ENCODE measurements at regions of chr11 and their contacts with region 1.

Region 1: DNA sequence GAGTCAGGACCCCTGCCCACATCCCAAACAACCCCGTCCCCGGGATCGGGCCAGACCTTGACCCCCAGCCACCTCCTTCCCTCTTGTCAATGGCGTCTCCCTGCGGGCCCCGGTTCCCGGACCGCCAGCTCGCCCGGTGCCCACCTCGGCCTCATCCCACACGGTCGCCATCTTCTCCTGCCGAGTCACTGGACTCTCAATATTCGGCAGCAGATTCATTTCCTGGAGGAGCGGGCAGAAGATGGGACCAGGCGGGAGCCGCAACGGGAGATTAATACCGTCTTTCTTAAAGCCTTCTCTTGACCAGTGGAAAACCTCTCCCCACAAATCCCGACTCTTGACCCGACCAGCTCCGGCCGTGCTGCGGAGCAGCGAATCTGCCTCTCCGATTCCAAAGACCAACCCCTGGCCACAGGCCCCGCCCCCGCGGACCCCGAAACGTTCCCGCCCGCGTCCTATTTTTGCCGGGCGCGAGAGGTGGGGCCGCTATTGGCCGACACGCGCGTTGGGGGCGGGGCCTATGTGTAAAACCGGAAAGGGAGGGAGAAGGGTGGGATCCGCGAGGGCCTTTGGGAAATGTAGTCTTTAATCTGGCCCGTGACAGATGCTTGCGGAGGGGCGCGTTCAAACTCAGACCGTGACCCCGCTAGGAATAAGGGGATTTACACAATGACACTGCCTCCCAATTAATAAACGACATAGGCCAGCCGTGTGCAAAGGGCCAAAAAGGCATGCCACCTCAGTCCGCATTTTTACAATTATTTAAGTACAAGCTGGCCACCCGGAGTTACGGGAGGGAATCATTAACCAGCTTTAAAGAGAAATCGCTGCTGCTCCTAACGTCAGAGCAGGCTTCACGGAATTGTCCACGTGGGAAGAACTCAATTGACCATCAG is at the start of gene PSMC3:
- DNase-seq: peak; percentile 100
- ATAC-seq: peak; percentile 98
- H3K4me3 Mint-ChIP-seq: peak within 1 kb of the TSS; percentile 100
- H3K27ac Mint-ChIP-seq: peak within 1 kb of the TSS; percentile 100
- H3K4me1 Mint-ChIP-seq: peaks cover 24% of the 10 kb centered on the region
- H3K27me3 Mint-ChIP-seq: no peaks in the 10 kb centered on the region
- total RNA-seq, gene PSMC3: 147 to 167 TPM

Region 2: GRCh38 chr11:46845740-46846509 is 580.4 kb before region 1 on chr11 and contains the start of gene CKAP5:
- CTCF ChIA-PET with region 1: no interaction called
- POLR2A ChIA-PET with region 1: no interaction called
- intact Hi-C with region 1: loop called in 1 of 2 experiments (anchors 1 kb)
- DNase-seq: peak; percentile 92
- ATAC-seq: peak; percentile 92
- H3K4me3 Mint-ChIP-seq: peak within 1 kb of the TSS; percentile 86
- H3K27ac Mint-ChIP-seq: peak within 1 kb of the TSS; percentile 94
- H3K4me1 Mint-ChIP-seq: peaks cover 30% of the 10 kb centered on the region
- H3K27me3 Mint-ChIP-seq: no peaks in the 10 kb centered on the region
- total RNA-seq, gene CKAP5: 166 to 183 TPM

Region 3: GRCh38 chr11:47213985-47214564 is 212.2 kb before region 1 on chr11:
- CTCF ChIA-PET with region 1: no interaction called
- POLR2A ChIA-PET with region 1: interaction called, 6 read pairs
- intact Hi-C with region 1: loop called (anchors 1 kb)
- DNase-seq: peak; percentile 94
- ATAC-seq: peak; percentile 80
- H3K4me3 Mint-ChIP-seq: peak overlapping the region; percentile 99
- H3K27ac Mint-ChIP-seq: peak overlapping the region; percentile 100
- H3K4me1 Mint-ChIP-seq: peaks cover 31% of the 10 kb centered on the region
- H3K27me3 Mint-ChIP-seq: no peaks in the 10 kb centered on the region

Region 4: GRCh38 chr11:47373876-47374720 is 52.2 kb before region 1 on chr11:
- CTCF ChIA-PET with region 1: interaction called, 7 read pairs
- POLR2A ChIA-PET with region 1: no interaction called
- intact Hi-C with region 1: loop called in 1 of 2 experiments (anchors 1 kb)
- DNase-seq: peak; percentile 92
- ATAC-seq: peak; percentile 89
- H3K4me3 Mint-ChIP-seq: no peak overlapping the region
- H3K27ac Mint-ChIP-seq: peak overlapping the region; percentile 25
- H3K4me1 Mint-ChIP-seq: peaks cover 22% of the 10 kb centered on the region
- H3K27me3 Mint-ChIP-seq: no peaks in the 10 kb centered on the region

Region 5: DNA sequence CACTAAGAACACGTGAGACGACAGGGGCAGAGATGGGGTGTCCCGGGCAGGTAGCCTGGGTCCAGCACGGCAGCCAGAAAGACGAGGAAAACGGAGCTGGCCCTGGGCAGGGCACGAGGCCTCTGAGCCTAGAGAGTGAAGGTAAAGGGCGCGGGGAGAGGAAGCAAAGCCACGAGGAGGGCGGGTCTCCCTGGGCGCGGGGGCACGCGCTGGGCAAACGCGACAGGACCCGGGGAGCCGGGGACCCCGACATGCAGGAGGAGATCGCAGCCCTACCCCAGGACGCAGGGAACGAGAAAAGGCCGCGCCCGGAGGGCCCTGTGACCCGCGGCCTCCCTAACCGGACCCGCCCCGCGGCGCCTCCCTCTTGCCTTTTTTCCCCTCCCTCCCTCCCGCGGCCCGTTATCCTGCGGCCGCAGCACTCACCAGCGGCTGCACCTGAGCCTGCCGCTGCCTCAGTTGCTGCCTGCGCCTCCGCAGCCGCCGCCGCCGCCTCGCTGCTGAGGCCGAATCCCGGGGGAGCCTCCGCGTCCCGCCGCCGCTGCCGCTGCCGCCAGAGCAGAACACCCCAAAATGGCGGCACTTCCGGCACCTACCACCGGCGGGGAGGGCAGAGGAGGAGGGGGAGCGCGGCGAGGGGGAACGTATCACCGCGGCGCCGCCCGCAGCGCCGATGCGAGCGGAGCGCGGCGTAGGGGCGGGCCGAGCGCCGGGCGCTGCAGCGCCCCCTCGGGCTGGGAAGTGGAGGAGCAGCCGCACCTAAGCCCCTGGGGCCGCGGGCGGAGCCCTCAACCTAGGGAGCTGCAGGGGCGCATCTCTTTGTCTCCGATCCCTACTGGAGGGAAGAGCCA is 126.5 kb after region 1 on chr11 and contains the start of gene CELF1:
- CTCF ChIA-PET with region 1: no interaction called
- POLR2A ChIA-PET with region 1: no interaction called
- intact Hi-C with region 1: loop called in 1 of 2 experiments (anchors 1 kb)
- DNase-seq: peak; percentile 97
- ATAC-seq: peak; percentile 94
- H3K4me3 Mint-ChIP-seq: peak within 1 kb of the TSS; percentile 96
- H3K27ac Mint-ChIP-seq: peak within 1 kb of the TSS; percentile 94
- H3K4me1 Mint-ChIP-seq: peaks cover 38% of the 10 kb centered on the region
- H3K27me3 Mint-ChIP-seq: no peaks in the 10 kb centered on the region
- total RNA-seq, gene CELF1: 132 to 143 TPM

Region 6: DNA sequence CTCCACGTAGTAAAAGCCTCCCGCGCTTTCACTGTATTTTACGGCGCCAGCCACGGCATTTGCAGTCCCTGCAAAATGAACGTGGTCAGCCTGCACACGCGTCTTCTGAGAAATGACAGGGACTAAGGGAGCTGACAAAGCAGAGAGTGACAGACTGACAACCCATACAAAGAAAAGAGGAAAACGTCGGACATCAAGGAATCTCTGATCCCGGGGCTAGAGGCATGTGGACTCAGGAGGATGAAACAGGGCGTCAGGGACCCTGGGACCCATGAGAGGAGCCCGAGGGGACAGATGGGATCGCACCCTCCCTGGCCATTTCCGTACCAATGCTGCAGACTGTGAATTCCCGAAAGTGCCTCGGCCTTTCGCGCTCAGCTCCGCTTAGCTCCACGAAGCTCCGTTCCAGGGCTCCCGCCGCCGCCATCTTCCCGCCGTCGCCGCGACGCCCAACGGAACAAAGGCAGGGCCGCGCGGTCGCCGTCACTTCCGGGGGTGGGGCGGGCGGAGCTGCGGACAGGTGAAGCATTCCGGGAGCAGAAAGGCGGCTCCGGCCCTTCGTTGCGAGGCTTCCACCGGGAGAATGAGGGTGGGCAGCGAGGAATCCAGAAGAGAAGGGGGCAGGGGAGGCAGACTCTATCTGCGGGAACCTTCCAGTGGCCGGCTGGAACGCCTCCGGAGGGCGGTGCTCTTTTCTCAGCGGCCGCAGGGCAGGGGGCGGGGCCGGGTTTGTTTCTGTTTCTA is 421.8 kb after region 1 on chr11 and contains the start of gene NUP160:
- CTCF ChIA-PET with region 1: no interaction called
- POLR2A ChIA-PET with region 1: no interaction called
- intact Hi-C with region 1: loop called in 1 of 2 experiments (anchors 1 kb)
- DNase-seq: peak; percentile 94
- ATAC-seq: peak; percentile 88
- H3K4me3 Mint-ChIP-seq: peak within 1 kb of the TSS; percentile 90
- H3K27ac Mint-ChIP-seq: peak within 1 kb of the TSS; percentile 99
- H3K4me1 Mint-ChIP-seq: peaks cover 44% of the 10 kb centered on the region
- H3K27me3 Mint-ChIP-seq: no peaks in the 10 kb centered on the region
- total RNA-seq, gene NUP160: 67.1 to 84.5 TPM

Region 7: GRCh38 chr11:48141475-48142122 is 715.3 kb after region 1 on chr11:
- CTCF ChIA-PET with region 1: no interaction called
- POLR2A ChIA-PET with region 1: no interaction called
- intact Hi-C with region 1: no loop called
- DNase-seq: no peak
- ATAC-seq: no peak
- H3K4me3 Mint-ChIP-seq: no peak overlapping the region
- H3K27ac Mint-ChIP-seq: no peak overlapping the region
- H3K4me1 Mint-ChIP-seq: peaks cover 8% of the 10 kb centered on the region
- H3K27me3 Mint-ChIP-seq: no peaks in the 10 kb centered on the region

Measured in activated CD4-positive, alpha-beta T cell treated with anti-CD3 and anti-CD28 coated beads for 36 hours (primary cell).